Activated T-helper 1 cell treated with anti-CD3 and anti-CD28 coated beads, Interleukin-12 subunit alpha, Interleukin-12 subunit beta, Interleukin-2, Interleukin-4 antibody, amounts not matched to agents 30 ng/mL and 10 ng/mL and 1 ng/mL, durations not matched to agents 14 hours and 24 hours and 36 hours (primary cell): ENCODE measurements at regions of chr3 and their contacts with region 1.

Region 1: DNA sequence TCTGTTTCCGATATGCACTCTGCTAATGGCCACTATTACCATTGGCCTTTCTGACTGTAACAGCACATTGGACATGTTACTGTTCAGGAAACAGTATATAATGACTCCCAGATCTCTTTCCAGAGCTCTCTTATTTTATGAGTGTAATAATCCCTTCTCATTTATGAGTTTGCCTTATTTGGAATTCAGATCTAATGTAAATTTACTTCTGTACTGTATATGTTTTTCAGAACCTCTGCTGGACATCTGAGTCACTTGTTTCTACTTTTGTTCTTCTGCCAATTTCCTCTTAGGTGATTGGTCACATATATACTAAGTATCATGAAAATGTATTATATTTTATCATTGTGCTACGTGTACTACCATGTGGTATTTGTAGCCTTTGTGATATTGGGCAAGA is 30.5 kb downstream of the RSRC1 start:
- DNase-seq: no peak
- H3K4me3 Mint-ChIP-seq: no peak overlapping the region
- H3K27ac Mint-ChIP-seq: no peak overlapping the region
- H3K4me1 Mint-ChIP-seq: no peaks in the 10 kb centered on the region
- H3K27me3 Mint-ChIP-seq: no peaks in the 10 kb centered on the region

Region 2: GRCh38 chr3:158127250-158128219 is 12.9 kb before region 1 on chr3:
- intact Hi-C with region 1: loop called (anchors 2 kb)
- DNase-seq: no peak
- H3K4me3 Mint-ChIP-seq: no peak overlapping the region
- H3K27ac Mint-ChIP-seq: no peak overlapping the region
- H3K4me1 Mint-ChIP-seq: peaks cover 14% of the 10 kb centered on the region
- H3K27me3 Mint-ChIP-seq: no peaks in the 10 kb centered on the region

Region 3: DNA sequence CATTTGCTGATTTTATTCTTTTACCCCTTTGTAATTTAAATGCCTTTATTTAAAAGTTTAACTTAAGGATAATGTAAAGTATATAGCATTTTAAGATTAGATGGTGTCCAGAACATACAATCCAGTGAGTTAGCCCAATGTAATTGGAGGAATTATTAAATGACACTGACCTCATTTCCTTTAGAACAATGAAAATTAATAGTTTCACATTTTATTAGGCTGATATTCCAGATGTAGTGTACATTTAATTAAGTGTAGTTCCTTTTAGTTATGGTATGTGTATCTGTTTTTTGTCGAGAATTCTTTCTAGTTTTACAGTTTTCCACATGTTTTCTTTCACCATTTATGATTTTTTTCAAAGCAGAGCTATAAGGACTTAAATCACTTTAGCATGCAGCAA is 45.3 kb after region 1 on chr3:
- intact Hi-C with region 1: no loop called
- DNase-seq: no peak
- H3K4me3 Mint-ChIP-seq: no peak overlapping the region
- H3K27ac Mint-ChIP-seq: no peak overlapping the region
- H3K4me1 Mint-ChIP-seq: no peaks in the 10 kb centered on the region
- H3K27me3 Mint-ChIP-seq: no peaks in the 10 kb centered on the region